Activated CD4-positive, alpha-beta T cell treated with anti-CD3 and anti-CD28 coated beads, Interleukin-2, amount 10 ng/mL, durations not matched to agents 24 days and 14 days (primary cell): ENCODE measurements at regions of chr3 and their contacts with region 1.

Region 1: GRCh38 chr3:33074217-33075067 is 22.5 kb downstream of the GLB1 start:
- DNase-seq: peak; percentile 89
- H3K4me3 Mint-ChIP-seq: no peak overlapping the region
- H3K27ac Mint-ChIP-seq: peak overlapping the region; percentile 64
- H3K4me1 Mint-ChIP-seq: peaks cover 25% of the 10 kb centered on the region
- H3K27me3 Mint-ChIP-seq: no peaks in the 10 kb centered on the region

Region 2: DNA sequence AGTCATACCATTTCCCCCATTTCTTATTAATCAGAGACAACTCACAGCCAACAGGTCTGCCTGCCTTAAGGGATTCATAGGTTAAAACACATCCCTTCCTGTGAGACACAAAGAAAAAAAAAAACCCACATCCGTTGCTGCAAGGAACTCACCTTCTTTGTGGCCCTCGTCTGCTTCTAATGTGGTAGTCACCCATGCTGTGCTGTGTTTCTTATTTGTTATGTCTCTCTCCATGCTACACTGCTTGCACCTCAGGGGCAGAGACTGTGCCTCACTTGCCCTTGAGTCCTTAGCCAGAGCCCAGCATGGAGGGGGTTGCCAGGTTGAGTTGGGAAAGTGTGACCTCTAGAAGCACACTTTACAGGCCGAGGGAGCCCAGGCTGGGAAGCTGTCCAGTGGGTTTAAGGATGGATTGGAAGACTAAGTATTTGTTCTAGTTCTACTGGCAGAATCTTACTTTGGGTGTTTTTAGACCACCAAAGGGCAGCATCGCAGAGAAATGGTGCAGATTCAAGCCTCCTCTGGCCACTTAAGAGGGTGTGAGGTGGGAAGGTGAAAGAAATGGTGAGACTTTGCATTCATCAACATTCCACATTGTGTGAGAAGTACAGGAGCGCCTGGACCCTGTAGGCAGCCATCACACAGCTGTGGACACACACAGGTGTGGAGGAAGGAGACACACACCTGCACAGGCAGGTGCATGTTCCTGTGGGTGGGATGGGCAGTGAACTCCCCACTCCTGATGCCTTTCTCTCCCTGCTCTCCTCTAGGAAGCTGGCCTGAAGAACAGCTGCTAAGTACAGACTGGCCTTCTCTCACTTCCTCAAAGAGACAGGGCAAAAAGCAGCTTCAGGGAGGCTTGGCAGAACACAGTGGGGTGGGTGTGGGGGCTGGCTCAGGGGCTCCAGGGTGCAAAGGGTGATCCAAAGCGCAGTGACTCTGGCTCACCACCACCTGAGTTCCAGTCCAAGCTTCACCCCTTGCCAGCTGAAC is 26.3 kb before region 1 on chr3:
- intact Hi-C with region 1: loop called (anchors 1 kb)
- DNase-seq: peak; percentile 91
- H3K4me3 Mint-ChIP-seq: peak overlapping the region; percentile 78
- H3K27ac Mint-ChIP-seq: peak overlapping the region; percentile 97
- H3K4me1 Mint-ChIP-seq: peaks cover 68% of the 10 kb centered on the region
- H3K27me3 Mint-ChIP-seq: no peaks in the 10 kb centered on the region

Region 3: DNA sequence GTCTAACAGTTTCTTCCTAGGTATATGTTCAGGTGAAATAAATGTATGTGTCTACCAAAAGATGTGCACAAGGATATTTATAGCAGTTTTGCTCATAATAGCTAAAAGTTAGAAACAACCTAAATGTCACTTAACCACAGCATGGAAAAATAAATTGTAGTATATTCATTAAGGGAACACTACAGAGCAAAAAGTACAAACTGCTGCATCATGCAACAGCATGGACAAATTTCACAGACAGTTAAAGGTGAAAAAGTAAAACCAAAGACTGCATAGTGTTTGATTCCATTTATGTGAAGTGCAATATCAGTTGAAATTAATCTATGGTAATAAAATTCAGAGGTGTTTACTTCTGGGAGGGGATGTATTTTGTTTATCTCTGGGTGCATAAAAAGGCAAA is 265.3 kb after region 1 on chr3:
- intact Hi-C with region 1: no loop called
- DNase-seq: no peak
- H3K4me3 Mint-ChIP-seq: no peak overlapping the region
- H3K27ac Mint-ChIP-seq: no peak overlapping the region
- H3K4me1 Mint-ChIP-seq: no peaks in the 10 kb centered on the region
- H3K27me3 Mint-ChIP-seq: peaks cover 6% of the 10 kb centered on the region